ENCODE measurements at regions of chr17 and their contacts with region 1.

Region 1: DNA sequence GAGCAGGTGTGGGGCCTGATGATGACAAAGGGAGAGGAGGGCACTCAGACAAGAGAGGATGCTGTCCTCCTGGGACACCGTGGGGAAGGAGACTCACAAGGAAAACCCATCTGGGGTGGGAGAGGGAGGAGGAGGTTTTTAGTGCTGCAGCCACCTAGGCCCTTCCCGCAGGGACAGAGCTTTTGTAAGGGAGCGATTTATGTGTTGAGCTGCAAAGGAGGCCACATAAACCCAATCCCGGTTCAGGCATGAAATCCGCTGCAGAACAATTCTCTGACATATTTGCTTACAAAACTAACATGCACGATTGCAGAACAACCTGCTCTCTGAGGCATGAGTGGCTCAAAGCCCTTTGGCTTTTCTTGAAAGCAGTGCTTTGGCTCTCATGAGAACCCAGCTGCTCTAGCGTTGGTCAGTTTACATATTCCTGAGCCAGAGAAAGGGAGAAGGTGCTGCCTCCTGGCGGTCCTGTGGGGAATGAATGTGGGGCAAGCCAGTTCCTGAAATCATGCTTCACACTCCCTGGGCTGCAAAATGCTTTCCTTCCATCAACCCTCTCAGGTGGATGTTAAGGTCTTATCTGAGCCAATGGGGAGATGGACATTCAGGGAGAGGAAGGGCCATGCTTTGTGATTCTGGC is 122.4 kb upstream of the NLRP1 start:
- DNase-seq: peak; percentile 73
- CTCF ChIP-seq: peak; percentile 63

Region 2: GRCh38 chr17:4956493-4957061 is 750.1 kb before region 1 on chr17:
- CTCF ChIA-PET with region 1: no interaction called
- POLR2A ChIA-PET with region 1: no interaction called
- DNase-seq: no peak
- CTCF ChIP-seq: peak; percentile 59

Region 3: GRCh38 chr17:5584383-5585286 is 122.1 kb before region 1 on chr17 and contains the start of gene NLRP1:
- CTCF ChIA-PET with region 1: interaction called, 26 read pairs
- POLR2A ChIA-PET with region 1: no interaction called
- DNase-seq: peak; percentile 93
- CTCF ChIP-seq: no peak

Region 4: DNA sequence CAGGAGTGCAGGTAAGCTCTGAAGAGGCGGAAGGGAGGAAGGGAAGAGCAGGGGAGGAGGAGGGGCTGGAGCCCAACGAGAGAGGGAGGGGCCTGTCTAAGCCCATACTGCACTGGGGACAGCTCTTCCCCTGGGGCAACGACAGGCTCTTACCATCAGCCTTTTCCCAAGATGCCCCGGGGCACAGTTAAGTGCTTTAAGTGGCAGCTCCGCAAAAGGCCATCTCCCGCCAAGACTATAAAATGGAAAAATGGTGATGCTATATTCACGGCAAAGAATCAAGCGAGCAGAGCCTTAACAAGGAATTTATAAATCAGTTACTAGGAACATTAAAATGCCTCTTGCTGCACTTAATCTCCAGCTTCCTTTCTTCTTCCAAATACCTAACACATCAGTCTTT is 12.1 kb before region 1 on chr17:
- CTCF ChIA-PET with region 1: interaction called, 21 read pairs
- POLR2A ChIA-PET with region 1: no interaction called
- DNase-seq: no peak
- CTCF ChIP-seq: no peak

Measured in GM10248 (cell line).